PC-3 (cell line): ENCODE measurements at regions of chr2 and their contacts with region 1.

Region 1: DNA sequence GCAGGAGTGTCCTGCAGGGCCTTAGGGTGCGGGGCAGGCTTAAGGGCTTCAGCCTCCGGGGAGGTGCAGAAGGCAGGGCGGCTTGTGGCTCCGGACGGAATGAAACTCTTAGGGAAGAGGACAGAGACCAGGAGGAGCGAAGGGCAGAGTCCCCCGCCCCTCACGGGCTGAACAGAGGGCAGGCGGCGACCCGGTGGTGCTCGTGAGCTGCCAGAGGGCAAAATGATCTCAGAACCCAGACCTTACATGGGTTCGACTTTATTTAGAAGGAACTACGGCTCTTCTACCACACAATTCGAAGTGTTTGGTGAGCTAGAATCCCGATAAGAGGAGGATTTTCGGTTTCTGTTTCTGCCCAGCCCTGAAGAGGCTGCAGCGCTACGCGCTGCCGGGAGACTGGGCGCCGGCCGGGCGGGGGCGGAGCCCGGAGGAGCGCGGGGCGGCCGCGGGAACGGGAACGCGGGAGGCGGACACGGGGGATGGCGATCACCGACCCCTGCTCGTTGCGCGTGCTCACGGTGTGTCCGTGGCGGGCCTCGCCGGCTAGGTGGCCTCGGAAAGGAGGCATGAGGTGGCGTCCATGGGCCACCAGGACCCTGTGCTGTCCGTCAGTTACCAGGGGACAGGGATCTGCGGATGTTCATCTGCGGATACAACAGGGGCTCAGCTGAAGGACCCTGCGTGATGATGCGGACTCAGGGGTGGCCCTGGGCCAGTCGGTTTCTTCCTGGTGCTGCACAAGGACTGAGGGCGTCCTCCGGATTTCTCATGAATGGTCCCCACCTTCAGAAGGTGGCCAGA is 4.2 kb upstream of the SP100 start:
- DNase-seq: peak; percentile 56
- ATAC-seq: peak; percentile 69
- H3K4me3 ChIP-seq: peak overlapping the region; percentile 78
- H3K27ac ChIP-seq: no peak overlapping the region
- H3K4me1 ChIP-seq: peaks cover 19% of the 10 kb centered on the region
- H3K27me3 ChIP-seq: no peaks in the 10 kb centered on the region
- CTCF ChIP-seq: no peak

Region 2: GRCh38 chr2:230219419-230220331 is 192.1 kb before region 1 on chr2 and contains the start of gene SP110:
- CTCF ChIA-PET with region 1: no interaction called
- POLR2A ChIA-PET with region 1: no interaction called
- intact Hi-C with region 1: loop called (anchors 10 kb)
- DNase-seq: peak; percentile 87
- ATAC-seq: peak; percentile 95
- H3K4me3 ChIP-seq: peak within 1 kb of the TSS; percentile 83
- H3K27ac ChIP-seq: peak within 1 kb of the TSS; percentile 26
- H3K4me1 ChIP-seq: 0 out of 2 replicates have a peak, but pooled peaks cover 9% of the 10 kb centered on the region
- H3K27me3 ChIP-seq: no peaks in the 10 kb centered on the region
- CTCF ChIP-seq: no peak
- total RNA-seq, gene SP110: 3.5 and 6.7 TPM in 2 replicates

Region 3: DNA sequence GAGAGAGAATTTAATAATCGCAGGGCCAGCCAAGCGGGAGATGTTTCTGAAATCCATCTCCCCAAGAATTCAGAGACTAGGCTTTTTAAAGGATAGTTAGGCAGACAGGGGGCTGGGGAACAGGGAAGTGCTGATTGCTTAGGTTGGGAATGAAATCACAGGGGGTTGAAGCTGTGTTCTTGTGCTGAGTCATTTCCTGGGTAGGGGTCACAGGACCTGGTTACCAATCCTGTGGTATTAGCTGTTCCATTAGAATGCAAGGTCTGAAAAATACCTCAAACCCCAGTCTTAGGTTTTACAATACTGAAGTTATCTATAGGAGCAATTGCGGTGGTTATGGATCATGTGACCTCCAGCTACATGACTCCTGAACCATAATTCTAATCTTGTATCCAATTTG is 181.7 kb before region 1 on chr2:
- CTCF ChIA-PET with region 1: no interaction called
- POLR2A ChIA-PET with region 1: no interaction called
- intact Hi-C with region 1: loop called (anchors 5 kb)
- DNase-seq: peak; percentile 48
- ATAC-seq: no peak
- H3K4me3 ChIP-seq: no peak overlapping the region
- H3K27ac ChIP-seq: no peak overlapping the region
- H3K4me1 ChIP-seq: peaks cover 13% of the 10 kb centered on the region
- H3K27me3 ChIP-seq: no peaks in the 10 kb centered on the region
- CTCF ChIP-seq: no peak

Region 4: DNA sequence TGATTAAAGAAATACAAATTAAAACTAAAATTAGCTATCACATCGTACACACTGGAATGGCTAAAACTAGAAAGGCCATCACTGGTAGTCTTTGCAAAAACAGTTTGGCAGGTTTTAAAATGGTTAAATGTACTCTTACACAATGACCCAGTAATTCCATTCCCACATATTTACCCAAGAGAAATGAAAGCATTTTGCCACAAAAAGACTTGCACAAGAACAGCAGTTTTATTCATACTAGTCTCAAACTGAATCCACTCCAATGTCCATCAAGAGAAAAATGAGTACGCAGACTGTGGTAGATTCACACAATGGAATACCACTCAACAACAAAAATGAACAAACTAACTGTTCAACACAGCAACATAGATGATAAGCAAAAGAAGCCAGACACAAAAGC is 55.7 kb before region 1 on chr2:
- CTCF ChIA-PET with region 1: no interaction called
- POLR2A ChIA-PET with region 1: no interaction called
- intact Hi-C with region 1: no loop called
- DNase-seq: no peak
- ATAC-seq: no peak
- H3K4me3 ChIP-seq: no peak overlapping the region
- H3K27ac ChIP-seq: no peak overlapping the region
- H3K4me1 ChIP-seq: no peaks in the 10 kb centered on the region
- H3K27me3 ChIP-seq: no peaks in the 10 kb centered on the region
- CTCF ChIP-seq: no peak

Region 5: DNA sequence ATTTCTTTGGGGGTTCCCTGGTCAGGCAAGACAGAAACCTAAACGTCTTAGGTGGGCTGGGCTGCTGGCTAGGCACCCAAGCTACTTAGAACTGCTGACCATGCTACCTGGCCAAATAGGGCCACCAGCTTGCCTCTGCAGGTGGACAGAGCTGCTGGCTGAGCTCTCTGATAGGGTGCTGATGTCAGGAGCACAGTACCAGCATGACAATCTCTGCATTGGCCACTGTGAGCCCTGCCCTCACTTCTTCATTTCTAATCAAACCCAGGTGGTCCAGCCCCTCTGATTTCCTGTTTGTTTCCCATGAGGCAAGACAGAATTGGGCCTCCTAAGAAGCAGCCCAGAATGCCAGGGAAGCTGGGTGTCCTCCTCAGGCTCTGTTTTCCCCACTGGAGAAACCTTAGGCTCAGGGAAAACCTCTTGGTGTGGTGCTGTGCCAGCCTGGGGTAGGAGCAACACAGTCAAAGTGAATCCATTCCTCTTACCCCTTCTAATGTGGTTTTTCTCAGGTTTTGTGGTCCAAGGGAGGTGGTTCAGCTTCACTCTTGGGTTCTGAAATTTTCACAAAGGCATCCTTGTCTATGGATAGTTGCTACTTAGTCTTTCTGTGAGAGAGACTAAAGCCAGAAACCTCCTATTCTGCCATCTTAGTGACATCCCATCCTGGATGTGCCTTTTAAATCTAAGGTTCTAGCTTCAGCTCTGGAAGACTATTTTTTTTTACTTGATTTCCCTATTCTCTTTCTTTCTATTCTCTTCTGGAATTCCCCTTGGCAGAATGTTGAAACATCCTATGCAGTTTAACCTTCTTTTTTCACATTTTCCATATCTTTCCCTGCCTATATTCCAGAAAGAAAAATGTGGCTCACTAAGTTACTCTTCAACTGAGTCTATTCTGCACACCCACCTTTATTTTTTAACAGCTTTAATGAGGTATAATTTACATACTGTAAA is 19.5 kb after region 1 on chr2:
- CTCF ChIA-PET with region 1: no interaction called
- POLR2A ChIA-PET with region 1: no interaction called
- intact Hi-C with region 1: no loop called
- DNase-seq: no peak
- ATAC-seq: no peak
- H3K4me3 ChIP-seq: no peak overlapping the region
- H3K27ac ChIP-seq: no peak overlapping the region
- H3K4me1 ChIP-seq: peaks cover 11% of the 10 kb centered on the region; the same call in 1 of the 2 replicates
- H3K27me3 ChIP-seq: no peaks in the 10 kb centered on the region
- CTCF ChIP-seq: no peak